Heart left ventricle (tissue), 16 donors: ENCODE measurements at regions of chr5 and their contacts with region 1.

Region 1: GRCh38 chr5:39892708-39893107 is 467.9 kb upstream of the DAB2 start:
- DNase-seq: no peak
- ATAC-seq: no peak
- H3K4me3 ChIP-seq: no peak overlapping the region
- H3K27ac ChIP-seq: no peak overlapping the region
- H3K4me1 ChIP-seq: no peaks in the 10 kb centered on the region
- H3K27me3 ChIP-seq: no peaks in the 10 kb centered on the region
- CTCF ChIP-seq: no peak
- POLR2A ChIP-seq: no peak

Region 2: DNA sequence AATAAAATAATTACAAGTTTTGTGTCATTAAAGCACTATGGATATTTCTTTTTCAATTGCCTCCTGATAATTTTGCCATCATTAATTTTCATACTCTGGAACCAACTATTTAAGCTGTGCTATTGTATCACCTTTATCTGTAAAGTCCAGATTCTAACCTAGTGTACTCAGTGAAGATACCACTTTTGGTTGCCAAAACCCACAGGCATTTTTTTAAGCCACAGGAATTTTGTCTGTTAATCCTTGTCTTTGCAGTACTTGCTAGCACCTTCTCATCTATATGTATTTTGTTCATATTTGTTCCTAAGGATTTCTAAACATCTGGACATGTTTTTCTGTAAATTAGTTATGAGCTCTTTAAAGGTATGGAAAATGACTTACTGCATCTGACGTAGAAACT is 13.4 kb after region 1 on chr5:
- intact Hi-C with region 1: loop called in 1 of 10 experiments (anchors 1 kb)
- DNase-seq: no peak
- ATAC-seq: no peak
- H3K4me3 ChIP-seq: no peak overlapping the region
- H3K27ac ChIP-seq: no peak overlapping the region
- H3K4me1 ChIP-seq: no peaks in the 10 kb centered on the region
- H3K27me3 ChIP-seq: no peaks in the 10 kb centered on the region
- CTCF ChIP-seq: no peak
- POLR2A ChIP-seq: no peak

Region 3: DNA sequence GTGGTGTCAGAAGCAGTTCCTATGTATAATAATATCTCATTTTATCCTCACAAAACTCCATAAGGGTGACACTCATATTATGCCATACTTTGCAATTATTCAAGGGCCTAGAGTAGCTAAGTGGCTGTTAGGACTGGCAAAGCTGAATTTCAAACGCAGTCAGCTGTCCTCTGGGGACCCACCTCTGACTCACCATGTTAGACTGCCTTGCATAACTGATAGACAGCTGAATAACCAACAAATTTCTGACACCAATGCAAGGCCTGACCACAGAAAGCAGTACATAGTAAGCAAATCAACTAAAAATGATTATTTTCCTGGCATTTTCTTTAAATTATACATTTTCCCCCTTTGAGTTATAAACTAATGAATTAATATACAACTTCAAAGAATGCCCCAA is 535.4 kb after region 1 on chr5:
- intact Hi-C with region 1: no loop called
- DNase-seq: peak in 2 of 5 donors; percentile 64 to 70
- ATAC-seq: peak in 3 of 4 donors; percentile 37 to 84 (median 63)
- H3K4me3 ChIP-seq: no peak overlapping the region
- H3K27ac ChIP-seq: no peak overlapping the region
- H3K4me1 ChIP-seq: peaks cover 0 to 28% (median 12%) of the 10 kb centered on the region in 12 donors
- H3K27me3 ChIP-seq: no peaks in the 10 kb centered on the region
- CTCF ChIP-seq: no peak
- POLR2A ChIP-seq: no peak